K562 (cell line): ENCODE measurements at regions of chr12 and their contacts with region 1.

Region 1: DNA sequence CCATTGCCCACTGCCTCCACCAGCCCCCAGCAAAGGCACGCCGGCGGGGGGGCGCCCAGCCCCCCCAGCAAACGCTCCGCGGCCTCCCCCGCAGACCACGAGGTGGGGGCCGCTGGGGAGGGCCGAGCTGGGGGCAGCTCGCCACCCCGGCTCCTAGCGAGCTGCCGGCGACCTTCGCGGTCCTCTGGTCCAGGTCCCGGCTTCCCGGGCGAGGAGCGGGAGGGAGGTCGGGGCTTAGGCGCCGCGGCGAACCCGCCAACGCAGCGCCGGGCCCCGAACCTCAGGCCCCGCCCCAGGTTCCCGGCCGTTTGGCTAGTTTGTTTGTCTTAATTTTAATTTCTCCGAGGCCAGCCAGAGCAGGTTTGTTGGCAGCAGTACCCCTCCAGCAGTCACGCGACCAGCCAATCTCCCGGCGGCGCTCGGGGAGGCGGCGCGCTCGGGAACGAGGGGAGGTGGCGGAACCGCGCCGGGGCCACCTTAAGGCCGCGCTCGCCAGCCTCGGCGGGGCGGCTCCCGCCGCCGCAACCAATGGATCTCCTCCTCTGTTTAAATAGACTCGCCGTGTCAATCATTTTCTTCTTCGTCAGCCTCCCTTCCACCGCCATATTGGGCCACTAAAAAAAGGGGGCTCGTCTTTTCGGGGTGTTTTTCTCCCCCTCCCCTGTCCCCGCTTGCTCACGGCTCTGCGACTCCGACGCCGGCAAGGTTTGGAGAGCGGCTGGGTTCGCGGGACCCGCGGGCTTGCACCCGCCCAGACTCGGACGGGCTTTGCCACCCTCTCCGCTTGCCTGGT is at the start of gene CDKN1B:
- DNase-seq: peak; percentile 72 to 86 (median 80)
- ATAC-seq: peak; percentile 77
- H3K4me3 ChIP-seq: peak within 1 kb of the TSS; percentile 99
- H3K27ac ChIP-seq: peak within 1 kb of the TSS; percentile 95
- H3K4me1 ChIP-seq: peaks cover 13 to 21% of the 10 kb centered on the region in 2 experiments
- H3K27me3 ChIP-seq: no peaks in the 10 kb centered on the region
- CTCF ChIP-seq: no peak
- EP300 ChIP-seq: no peak
- POLR2A ChIP-seq: peak; percentile 67
- RAD21 ChIP-seq: no peak
- polyA plus RNA-seq, gene CDKN1B: 2.6 to 3.0 TPM

Region 2: GRCh38 chr12:12356886-12357718 is 359.9 kb before region 1 on chr12 and contains the start of gene BORCS5:
- CTCF ChIA-PET with region 1: no interaction called
- POLR2A ChIA-PET with region 1: no interaction called
- in situ Hi-C with region 1: no loop called
- intact Hi-C with region 1: loop called (anchors 10 kb)
- DNase-seq: peak; percentile 89 to 97 (median 90)
- ATAC-seq: peak; percentile 93
- H3K4me3 ChIP-seq: peak within 1 kb of the TSS; percentile 86
- H3K27ac ChIP-seq: peak within 1 kb of the TSS; percentile 92
- H3K4me1 ChIP-seq: peaks cover 20 to 26% of the 10 kb centered on the region in 2 experiments; a peak in 4 of 5 replicates
- H3K27me3 ChIP-seq: no peaks in the 10 kb centered on the region
- CTCF ChIP-seq: peak; percentile 19 to 37 (median 28); a peak in 1 of 6 replicates
- EP300 ChIP-seq: no peak
- POLR2A ChIP-seq: peak; percentile 94
- RAD21 ChIP-seq: peak in 1 of 2 experiments; percentile 29; a peak in 2 of 4 replicates
- polyA plus RNA-seq, gene BORCS5: 0.31 to 0.77 TPM